Left colon (tissue), 2 donors: ENCODE measurements at regions of chr21 and their contacts with region 1.

Region 1: GRCh38 chr21:38352536-38353219 is 95.9 kb downstream of the KCNJ15 start:
- DNase-seq: peak in 1 of 2 donors; percentile 55
- ATAC-seq: peak; percentile 63

Region 2: DNA sequence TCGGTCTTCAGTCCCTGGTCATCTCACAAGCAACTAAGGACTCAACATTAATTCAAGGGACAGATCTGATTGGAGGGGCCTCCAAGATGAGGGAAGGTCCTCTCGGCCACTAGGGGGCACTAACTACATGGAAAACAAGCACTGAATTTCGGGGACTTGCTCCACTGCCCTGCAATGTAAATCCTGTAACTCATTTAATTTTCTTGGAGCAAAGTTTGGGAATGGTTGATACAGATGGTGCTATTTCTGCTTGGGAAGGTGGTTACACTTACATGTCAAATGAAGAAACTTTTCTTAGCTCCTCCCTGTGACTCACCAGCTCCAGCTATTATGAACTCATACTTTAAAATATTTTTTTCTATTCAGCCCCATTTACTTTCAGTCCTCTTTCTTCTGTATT is 193.3 kb before region 1 on chr21:
- intact Hi-C with region 1: loop called in 1 of 2 experiments (anchors 5 kb)
- DNase-seq: peak; percentile 32 to 61
- ATAC-seq: peak; percentile 59

Region 3: DNA sequence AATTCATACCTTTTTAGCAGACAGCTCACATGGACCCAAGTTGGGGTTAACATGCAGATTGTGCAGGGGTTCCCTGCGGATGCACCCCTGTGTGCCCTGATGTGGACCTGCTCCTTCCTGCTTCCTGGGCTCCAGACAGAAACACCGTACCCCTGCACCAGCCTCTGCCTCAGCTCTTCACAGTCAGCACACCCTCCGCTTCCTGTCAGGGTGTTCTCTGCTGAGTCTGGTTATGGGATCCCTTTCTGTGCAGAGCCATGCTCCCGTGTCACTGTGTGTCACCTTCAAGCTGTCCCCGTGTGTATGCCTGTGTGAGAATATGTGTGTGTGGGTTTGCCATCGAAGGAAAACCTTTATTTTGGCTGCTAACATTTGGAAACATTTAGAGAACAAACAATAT is 144.6 kb before region 1 on chr21:
- intact Hi-C with region 1: no loop called
- DNase-seq: no peak
- ATAC-seq: no peak

Region 4: DNA sequence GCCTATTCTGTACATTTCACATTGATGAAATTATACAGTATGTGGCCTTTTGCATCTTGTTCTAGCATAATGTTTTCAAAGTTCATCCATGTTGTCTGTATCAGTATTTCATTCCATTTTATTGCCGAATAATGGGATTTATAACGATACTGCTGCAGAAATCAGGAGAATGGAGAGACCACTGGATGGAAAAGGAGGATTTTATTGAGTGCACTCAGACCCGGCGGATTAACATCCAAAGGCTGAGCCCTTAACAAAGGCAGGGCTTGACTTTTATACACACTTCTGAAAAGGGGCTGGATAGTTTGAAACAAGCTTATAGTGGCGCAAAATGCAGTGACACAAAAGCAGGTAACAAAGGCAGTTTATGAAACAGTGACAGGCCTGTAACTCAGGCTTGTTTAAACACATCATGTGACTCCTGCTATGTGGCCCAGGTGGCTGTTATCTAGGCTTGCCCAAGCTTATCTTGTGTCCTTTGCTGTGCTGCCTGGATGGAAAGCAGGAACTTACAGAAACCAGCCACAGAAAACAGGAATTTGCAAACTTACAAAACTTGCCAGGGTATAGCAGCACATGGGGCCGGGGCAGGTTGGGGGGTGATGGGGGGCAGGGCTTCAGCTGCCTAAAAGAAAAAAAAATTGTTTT is 128.7 kb before region 1 on chr21:
- intact Hi-C with region 1: loop called in 1 of 2 experiments (anchors 5 kb)
- DNase-seq: no peak
- ATAC-seq: no peak